Endothelial cell of umbilical vein (primary cell): ENCODE measurements at regions of chr7 and their contacts with region 1.

Region 1: DNA sequence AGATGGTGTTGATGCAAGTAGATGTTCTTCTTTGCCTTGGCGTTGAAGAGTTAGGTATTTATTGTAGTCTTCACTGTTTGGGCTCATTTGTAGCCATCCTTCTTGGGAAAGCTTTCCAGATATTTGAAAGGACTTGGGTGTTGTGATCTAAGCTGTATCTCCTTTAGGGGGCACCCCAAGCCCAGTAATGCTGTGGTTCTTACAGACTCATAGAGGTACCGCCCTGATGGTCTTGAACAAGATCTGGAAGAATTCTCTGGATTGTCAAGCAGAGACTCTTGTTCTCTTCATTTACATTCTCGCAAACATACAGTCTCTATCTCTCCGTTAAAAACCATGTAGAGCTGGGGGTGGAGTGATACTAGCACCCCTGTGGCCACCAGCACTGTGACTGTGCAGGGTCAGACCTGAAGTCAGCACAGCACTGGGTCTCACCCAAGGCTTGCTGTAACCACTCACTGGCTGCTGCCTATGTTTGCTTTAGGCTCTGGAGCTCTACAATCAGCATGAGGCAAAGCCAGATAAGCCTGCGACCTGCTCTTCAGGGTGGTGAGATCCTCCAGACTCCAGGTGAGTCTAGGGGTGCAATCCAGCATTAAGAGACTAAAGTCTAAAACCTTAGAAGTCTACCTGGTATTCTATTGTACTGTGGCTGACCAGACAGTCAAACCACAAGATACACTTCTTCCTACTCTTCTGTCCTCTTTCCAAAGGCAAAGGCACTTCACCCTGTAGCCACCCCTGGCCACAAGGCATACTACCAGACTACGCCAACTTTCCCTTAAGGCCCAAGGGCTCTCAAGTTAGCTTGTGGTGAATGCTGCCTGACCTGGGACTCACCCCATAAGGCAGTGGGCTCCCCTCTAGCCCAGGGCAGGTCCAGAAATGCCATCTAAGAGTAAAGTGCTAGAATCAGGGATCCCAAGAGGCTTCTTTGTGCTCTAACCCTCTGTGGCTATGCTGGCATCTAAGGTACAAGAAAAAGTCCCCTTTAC is 209.7 kb upstream of the TMEM196 start:
- DNase-seq: peak; percentile 58
- H3K4me3 ChIP-seq: no peak overlapping the region
- H3K27ac ChIP-seq: no peak overlapping the region
- H3K4me1 ChIP-seq: no peaks in the 10 kb centered on the region
- H3K27me3 ChIP-seq: no peaks in the 10 kb centered on the region
- CTCF ChIP-seq: peak in 1 of 2 donors; percentile 31
- POLR2A ChIP-seq: no peak

Region 2: GRCh38 chr7:19708397-19709248 is 274.5 kb before region 1 on chr7 and contains the start of gene POLR1F:
- CTCF ChIA-PET with region 1: interaction called, 4 read pairs
- POLR2A ChIA-PET with region 1: no interaction called
- dilution Hi-C with region 1: no loop called
- intact Hi-C with region 1: loop called (anchors 2 kb)
- DNase-seq: peak; percentile 97
- H3K4me3 ChIP-seq: peak within 1 kb of the TSS; percentile 45 to 83 (median 77)
- H3K27ac ChIP-seq: peak within 1 kb of the TSS; percentile 44
- H3K4me1 ChIP-seq: peaks cover 19% of the 10 kb centered on the region
- H3K27me3 ChIP-seq: peaks cover 0 to 12% of the 10 kb centered on the region in 2 experiments
- CTCF ChIP-seq: peak; percentile 88 to 92
- POLR2A ChIP-seq: peak; percentile 92
- total RNA-seq, gene POLR1F: 21.0 and 27.0 TPM in 2 replicates

Region 3: GRCh38 chr7:20172736-20173334 is 189.7 kb after region 1 on chr7:
- CTCF ChIA-PET with region 1: interaction called, 3 read pairs
- POLR2A ChIA-PET with region 1: no interaction called
- dilution Hi-C with region 1: no loop called
- intact Hi-C with region 1: loop called (anchors 1 kb)
- DNase-seq: peak; percentile 51
- H3K4me3 ChIP-seq: no peak overlapping the region
- H3K27ac ChIP-seq: no peak overlapping the region
- H3K4me1 ChIP-seq: no peaks in the 10 kb centered on the region
- H3K27me3 ChIP-seq: no peaks in the 10 kb centered on the region
- CTCF ChIP-seq: peak; percentile 55 to 66
- POLR2A ChIP-seq: no peak